Activated naive CD4-positive, alpha-beta T cell treated with anti-CD3 and anti-CD28 coated beads, Interleukin-2, amount 10 ng/mL, durations not matched to agents 7 days and 5 days (primary cell): ENCODE measurements at regions of chr11 and their contacts with region 1.

Region 1: DNA sequence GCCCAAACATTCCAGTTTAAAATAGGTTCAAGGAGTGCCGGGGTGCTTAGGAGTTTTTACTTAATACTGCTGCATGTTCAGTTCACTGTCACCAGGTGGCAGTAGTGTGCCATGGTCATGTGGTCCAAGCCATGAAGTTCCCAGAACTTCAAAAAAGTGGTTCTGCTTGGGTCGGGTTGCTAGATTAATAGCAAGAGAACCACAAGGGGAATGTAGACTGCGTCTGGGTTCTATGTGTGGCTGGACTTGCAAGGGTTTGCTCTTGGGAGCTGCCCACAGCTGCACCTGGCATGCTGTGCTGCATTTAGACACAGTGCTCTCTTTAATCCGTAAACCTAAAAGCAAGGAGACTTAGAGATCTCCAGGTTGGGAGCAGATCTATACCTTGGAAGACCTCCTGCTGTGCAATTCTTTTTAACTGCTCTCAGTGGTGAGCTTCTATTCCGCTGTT is 6.5 kb upstream of the SPON1 start:
- DNase-seq: peak; percentile 64
- H3K4me3 Mint-ChIP-seq: no peak overlapping the region
- H3K27ac Mint-ChIP-seq: no peak overlapping the region
- H3K4me1 Mint-ChIP-seq: peaks cover 7% of the 10 kb centered on the region
- H3K27me3 Mint-ChIP-seq: peaks cover 38% of the 10 kb centered on the region

Region 2: DNA sequence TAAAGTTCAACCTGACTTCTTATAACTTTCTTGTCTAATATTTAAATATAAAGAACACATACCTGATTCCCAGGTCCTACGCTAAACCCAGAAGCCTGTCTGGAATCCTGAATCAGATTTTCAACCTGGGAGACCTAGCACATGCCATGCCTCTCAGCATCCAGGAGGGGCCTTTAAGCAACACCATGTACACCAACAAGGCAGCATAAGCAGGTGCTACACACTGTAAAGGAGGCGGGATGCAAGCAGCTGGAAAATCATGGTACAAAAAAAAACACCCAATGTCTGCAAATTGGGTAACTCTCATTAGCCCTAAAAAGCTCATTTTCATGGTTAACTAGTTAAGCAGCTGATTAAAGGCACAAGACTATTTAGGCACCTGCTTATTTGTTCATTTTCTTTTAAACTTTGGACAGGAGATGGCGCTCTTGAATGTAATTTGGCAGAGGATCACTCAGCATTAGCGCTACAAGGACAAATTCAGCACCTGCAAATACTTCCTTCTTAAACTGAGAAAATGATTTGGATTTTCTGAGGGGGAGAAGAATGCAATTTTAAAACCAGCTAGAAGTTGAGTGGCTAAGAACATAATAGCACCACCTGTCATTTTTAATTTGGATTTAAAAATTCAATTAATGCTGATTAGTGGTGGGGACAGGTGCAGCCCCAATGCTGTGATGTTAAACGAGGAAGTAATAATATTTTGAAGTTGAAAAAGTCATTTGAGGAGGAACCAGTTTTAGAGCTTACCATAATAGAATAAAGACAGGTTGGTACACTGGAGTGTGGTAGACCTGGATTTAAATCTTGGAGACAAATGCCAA is 183.6 kb before region 1 on chr11:
- CTCF ChIA-PET with region 1: interaction called, 12 read pairs
- DNase-seq: peak; percentile 40
- H3K4me3 Mint-ChIP-seq: no peak overlapping the region
- H3K27ac Mint-ChIP-seq: no peak overlapping the region
- H3K4me1 Mint-ChIP-seq: peaks cover 11% of the 10 kb centered on the region
- H3K27me3 Mint-ChIP-seq: peaks cover 25% of the 10 kb centered on the region

Region 3: GRCh38 chr11:13970986-13971385 is 15.0 kb after region 1 on chr11:
- CTCF ChIA-PET with region 1: interaction called, 26 read pairs
- DNase-seq: peak; percentile 29
- H3K4me3 Mint-ChIP-seq: no peak overlapping the region
- H3K27ac Mint-ChIP-seq: no peak overlapping the region
- H3K4me1 Mint-ChIP-seq: peaks cover 29% of the 10 kb centered on the region
- H3K27me3 Mint-ChIP-seq: peaks cover 28% of the 10 kb centered on the region

Region 4: GRCh38 chr11:13984616-13985450 is 28.8 kb after region 1 on chr11:
- CTCF ChIA-PET with region 1: no interaction called
- DNase-seq: no peak
- H3K4me3 Mint-ChIP-seq: no peak overlapping the region
- H3K27ac Mint-ChIP-seq: no peak overlapping the region
- H3K4me1 Mint-ChIP-seq: no peaks in the 10 kb centered on the region
- H3K27me3 Mint-ChIP-seq: peaks cover 14% of the 10 kb centered on the region

Region 5: DNA sequence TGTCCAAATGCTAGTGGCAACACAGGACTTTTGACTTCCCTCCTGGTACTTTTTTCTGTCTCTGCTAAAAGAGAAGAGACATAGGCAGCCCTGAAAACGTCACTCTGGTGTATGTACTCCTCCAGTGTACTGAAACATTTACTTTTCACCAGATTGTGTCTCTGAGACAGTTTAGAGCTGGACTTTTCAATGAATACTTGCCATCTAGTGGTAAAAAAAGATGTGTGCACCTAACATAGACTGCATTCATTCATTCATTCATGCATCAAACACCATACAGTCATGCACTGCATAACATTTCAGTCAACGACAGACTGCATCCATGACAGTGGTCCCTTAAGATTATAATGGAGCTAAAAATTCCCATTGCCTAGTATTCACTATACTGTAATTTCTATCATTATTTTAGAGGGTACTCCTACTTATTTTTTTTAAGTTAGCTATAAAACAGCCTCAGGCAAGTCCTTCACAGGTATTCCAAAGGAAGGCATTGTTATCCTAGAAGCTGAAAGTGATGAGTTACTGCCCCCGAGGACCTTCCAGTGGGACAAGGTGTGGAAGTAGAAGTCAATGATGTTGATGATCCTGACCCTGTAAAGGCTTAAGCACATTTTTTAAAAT is 192.8 kb after region 1 on chr11:
- CTCF ChIA-PET with region 1: interaction called, 45 read pairs
- DNase-seq: no peak
- H3K4me3 Mint-ChIP-seq: no peak overlapping the region
- H3K27ac Mint-ChIP-seq: no peak overlapping the region
- H3K4me1 Mint-ChIP-seq: no peaks in the 10 kb centered on the region
- H3K27me3 Mint-ChIP-seq: peaks cover 5% of the 10 kb centered on the region

Region 6: DNA sequence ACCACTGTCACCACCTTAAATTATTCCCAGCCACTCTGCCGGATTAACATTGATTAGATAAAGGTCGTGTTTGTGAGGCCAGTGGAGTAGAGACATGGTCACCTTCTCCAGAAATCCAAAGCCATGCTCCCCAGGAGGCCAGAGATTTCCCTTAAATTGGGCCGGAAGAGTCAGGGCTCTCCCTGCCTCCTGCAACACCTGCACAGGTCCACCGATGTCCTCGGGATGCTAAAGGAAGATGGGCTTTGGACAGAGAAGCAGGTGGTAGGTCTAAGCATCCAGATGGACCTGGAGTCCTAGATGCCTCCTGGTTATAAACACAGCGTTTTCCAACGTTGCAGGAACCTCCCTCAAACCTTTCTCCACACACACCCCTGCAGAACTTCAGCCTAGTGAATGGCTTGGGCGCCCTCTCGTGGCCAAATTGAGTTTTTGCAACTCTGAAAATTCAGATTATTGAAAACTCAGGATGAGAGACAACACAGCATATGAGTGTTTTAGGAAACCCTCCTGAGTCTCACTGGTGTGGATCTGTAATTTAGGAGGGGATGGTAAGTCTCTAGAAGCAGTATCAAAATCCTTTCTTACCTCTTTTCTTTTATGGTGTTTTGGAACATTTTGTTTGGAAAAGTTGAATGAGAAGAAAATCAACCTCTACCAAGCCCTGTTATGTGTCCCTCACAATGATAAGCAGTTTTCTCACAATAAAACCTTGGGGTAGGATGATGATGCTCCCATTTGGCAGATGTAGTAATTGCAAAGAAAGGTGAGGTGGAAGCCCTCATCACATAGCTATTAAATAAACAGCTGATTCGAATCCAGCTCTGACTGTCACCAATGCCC is 293.3 kb after region 1 on chr11:
- CTCF ChIA-PET with region 1: interaction called, 25 read pairs
- DNase-seq: peak; percentile 79
- H3K4me3 Mint-ChIP-seq: peak overlapping the region; percentile 29
- H3K27ac Mint-ChIP-seq: no peak overlapping the region
- H3K4me1 Mint-ChIP-seq: peaks cover 24% of the 10 kb centered on the region
- H3K27me3 Mint-ChIP-seq: peaks cover 29% of the 10 kb centered on the region